ENCODE measurements at regions of chr15 and their contacts with region 1.

Region 1: DNA sequence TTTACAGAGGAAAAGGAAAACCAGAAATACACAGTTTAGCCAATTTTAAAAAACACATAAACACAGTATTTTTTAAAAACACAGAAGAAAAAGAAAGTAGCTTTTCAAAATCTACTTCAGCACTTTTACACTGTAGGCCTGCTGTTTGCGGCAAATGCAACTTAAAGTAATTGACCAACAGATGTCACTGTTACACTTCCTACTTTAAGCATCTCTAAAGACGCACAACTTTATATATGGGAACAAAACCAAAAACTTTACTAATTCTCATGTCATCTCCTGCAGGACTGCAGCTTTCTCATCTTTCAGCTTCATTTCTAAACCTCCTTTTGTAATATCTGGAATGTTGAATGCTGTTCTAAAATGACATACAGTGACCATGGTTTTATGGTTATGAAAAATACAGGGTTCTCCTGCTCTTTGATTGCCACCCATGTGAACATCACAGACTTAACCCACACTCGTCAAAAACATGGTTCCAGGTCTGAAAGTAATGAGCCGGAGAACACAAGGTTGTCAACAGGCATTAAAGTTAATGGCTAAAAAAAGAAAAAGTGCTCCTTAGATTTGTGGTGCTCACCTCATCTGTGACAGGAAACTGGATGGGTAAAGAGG is 107.9 kb downstream of the FMN1 start:
- DNase-seq: no peak
- ATAC-seq: no peak
- H3K4me3 Mint-ChIP-seq: no peak overlapping the region
- H3K27ac Mint-ChIP-seq: no peak overlapping the region
- H3K4me1 Mint-ChIP-seq: no peaks in the 10 kb centered on the region
- H3K27me3 Mint-ChIP-seq: no peaks in the 10 kb centered on the region
- CTCF ChIP-seq: no peak

Region 2: GRCh38 chr15:33142708-33143107 is 56.1 kb after region 1 on chr15:
- CTCF ChIA-PET with region 1: no interaction called
- POLR2A ChIA-PET with region 1: no interaction called
- intact Hi-C with region 1: loop called (anchors 5 kb)
- DNase-seq: no peak
- ATAC-seq: no peak
- H3K4me3 Mint-ChIP-seq: no peak overlapping the region
- H3K27ac Mint-ChIP-seq: no peak overlapping the region
- H3K4me1 Mint-ChIP-seq: no peaks in the 10 kb centered on the region
- H3K27me3 Mint-ChIP-seq: no peaks in the 10 kb centered on the region
- CTCF ChIP-seq: no peak

Measured in activated B cell treated with CpG ODN at 0.5 μM for 24 hours (primary cell).